PC-3 (cell line): ENCODE measurements at regions of chr7 and their contacts with region 1.

Region 1: GRCh38 chr7:102925976-102926782 is 13.4 kb downstream of the LRRC17 start:
- DNase-seq: peak; percentile 12
- ATAC-seq: no peak
- H3K4me3 ChIP-seq: no peak overlapping the region
- H3K27ac ChIP-seq: no peak overlapping the region
- H3K4me1 ChIP-seq: peaks cover 14% of the 10 kb centered on the region; the same call in 1 of the 2 replicates
- H3K27me3 ChIP-seq: no peaks in the 10 kb centered on the region
- CTCF ChIP-seq: no peak

Region 2: DNA sequence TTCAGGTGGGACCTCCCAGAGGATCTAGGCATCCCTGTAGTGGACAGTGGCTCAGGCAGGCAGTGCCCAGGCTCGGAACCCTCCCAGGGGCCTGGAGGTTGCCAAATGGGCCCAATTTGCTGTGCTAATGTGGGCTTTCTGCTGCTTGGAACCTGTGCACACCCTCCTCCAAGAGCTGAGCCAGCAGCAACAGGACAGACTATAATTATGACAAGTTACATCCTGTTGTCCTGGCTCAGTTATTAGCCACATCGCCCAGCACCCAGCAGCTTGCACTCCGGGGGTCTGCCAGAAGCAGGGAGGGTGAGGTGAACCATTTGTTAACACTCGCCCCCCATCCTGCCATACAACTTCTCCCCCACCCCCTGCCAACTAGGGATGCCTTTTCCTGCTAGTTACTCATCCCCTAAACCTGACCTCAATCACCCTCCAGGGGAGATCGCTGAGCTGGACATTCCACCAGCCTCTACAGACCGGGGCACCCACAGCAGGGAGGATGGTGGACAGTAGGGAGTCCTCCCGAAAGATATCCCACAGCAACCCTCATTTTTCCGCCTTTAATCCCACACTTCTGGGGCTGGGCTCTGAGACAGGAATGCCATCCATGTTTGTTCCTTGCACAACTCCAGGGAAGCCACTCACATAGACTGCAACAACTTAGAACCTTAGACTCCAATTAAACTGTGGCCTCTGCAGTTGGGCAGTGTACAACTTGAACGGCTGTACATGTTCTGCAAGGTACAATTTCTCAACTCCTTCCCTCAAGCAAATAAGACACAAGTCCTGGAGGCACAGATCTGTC is 1289.2 kb before region 1 on chr7:
- CTCF ChIA-PET with region 1: no interaction called
- POLR2A ChIA-PET with region 1: no interaction called
- intact Hi-C with region 1: no loop called
- DNase-seq: no peak
- ATAC-seq: peak; percentile 15; the same call in 1 of the 2 replicates
- H3K4me3 ChIP-seq: no peak overlapping the region
- H3K27ac ChIP-seq: no peak overlapping the region
- H3K4me1 ChIP-seq: peaks cover 5% of the 10 kb centered on the region; the same call in 1 of the 2 replicates
- H3K27me3 ChIP-seq: no peaks in the 10 kb centered on the region
- CTCF ChIP-seq: no peak

Region 3: GRCh38 chr7:102897856-102898531 is 28.2 kb before region 1 on chr7:
- CTCF ChIA-PET with region 1: interaction called, 8 read pairs
- POLR2A ChIA-PET with region 1: no interaction called
- intact Hi-C with region 1: loop called (anchors 2 kb)
- DNase-seq: no peak
- ATAC-seq: no peak
- H3K4me3 ChIP-seq: no peak overlapping the region
- H3K27ac ChIP-seq: no peak overlapping the region
- H3K4me1 ChIP-seq: peaks cover 6% of the 10 kb centered on the region
- H3K27me3 ChIP-seq: no peaks in the 10 kb centered on the region
- CTCF ChIP-seq: no peak